ENCODE measurements at regions of chr13 and their contacts with region 1.

Region 1: GRCh38 chr13:23020223-23020843 is 160.4 kb upstream of the SGCG start:
- DNase-seq: peak; percentile 58
- H3K4me3 ChIP-seq: no peak overlapping the region
- H3K27ac ChIP-seq: no peak overlapping the region
- H3K4me1 ChIP-seq: no peaks in the 10 kb centered on the region
- H3K27me3 ChIP-seq: no peaks in the 10 kb centered on the region
- CTCF ChIP-seq: peak; percentile 71 to 81
- POLR2A ChIP-seq: no peak

Region 2: GRCh38 chr13:21625366-21625765 is 1395.0 kb before region 1 on chr13:
- CTCF ChIA-PET with region 1: interaction called, 14 read pairs
- POLR2A ChIA-PET with region 1: no interaction called
- dilution Hi-C with region 1: no loop called
- intact Hi-C with region 1: no loop called
- DNase-seq: peak; percentile 11
- H3K4me3 ChIP-seq: no peak overlapping the region
- H3K27ac ChIP-seq: no peak overlapping the region
- H3K4me1 ChIP-seq: no peaks in the 10 kb centered on the region
- H3K27me3 ChIP-seq: peaks cover 0 to 4% of the 10 kb centered on the region in 2 experiments
- CTCF ChIP-seq: no peak
- POLR2A ChIP-seq: no peak

Region 3: DNA sequence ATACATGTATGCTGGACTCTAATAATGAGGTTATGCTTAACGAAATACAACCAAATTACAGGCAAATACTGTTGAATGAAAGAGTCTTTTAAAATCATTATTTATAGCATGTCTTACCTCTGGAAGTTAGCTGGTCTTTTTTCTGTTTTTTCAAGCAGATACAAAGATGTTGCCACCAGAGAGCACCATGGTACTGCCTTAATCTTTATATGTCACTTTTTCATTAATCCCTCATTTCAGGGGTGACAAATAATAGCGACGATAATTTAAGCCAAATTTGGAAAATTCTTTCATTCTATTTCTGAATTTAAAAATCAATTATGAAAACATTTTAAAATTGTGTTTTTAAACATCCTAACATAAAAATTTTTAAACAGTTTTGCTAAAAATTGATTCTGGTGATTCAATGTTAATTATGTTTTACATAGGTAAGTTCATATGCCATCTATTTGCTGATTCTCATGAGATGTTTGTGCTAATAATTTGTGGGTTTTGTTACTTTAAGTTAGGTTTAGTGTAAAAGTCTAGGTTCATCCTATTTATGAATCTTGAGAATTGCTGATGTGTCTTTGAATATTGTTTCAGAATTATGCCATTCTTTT is 218.8 kb before region 1 on chr13:
- CTCF ChIA-PET with region 1: no interaction called
- POLR2A ChIA-PET with region 1: no interaction called
- dilution Hi-C with region 1: no loop called
- intact Hi-C with region 1: loop called (anchors 1 kb)
- DNase-seq: peak; percentile 15
- H3K4me3 ChIP-seq: no peak overlapping the region
- H3K27ac ChIP-seq: no peak overlapping the region
- H3K4me1 ChIP-seq: no peaks in the 10 kb centered on the region
- H3K27me3 ChIP-seq: no peaks in the 10 kb centered on the region
- CTCF ChIP-seq: no peak
- POLR2A ChIP-seq: no peak

Measured in endothelial cell of umbilical vein (primary cell).